ENCODE measurements at regions of chr1 and their contacts with region 1.

Region 1: GRCh38 chr1:100265931-100266740 is at the start of gene RTCA:
- DNase-seq: peak; percentile 54
- H3K4me3 ChIP-seq: peak within 1 kb of the TSS; percentile 90
- CTCF ChIP-seq: no peak

Region 2: DNA sequence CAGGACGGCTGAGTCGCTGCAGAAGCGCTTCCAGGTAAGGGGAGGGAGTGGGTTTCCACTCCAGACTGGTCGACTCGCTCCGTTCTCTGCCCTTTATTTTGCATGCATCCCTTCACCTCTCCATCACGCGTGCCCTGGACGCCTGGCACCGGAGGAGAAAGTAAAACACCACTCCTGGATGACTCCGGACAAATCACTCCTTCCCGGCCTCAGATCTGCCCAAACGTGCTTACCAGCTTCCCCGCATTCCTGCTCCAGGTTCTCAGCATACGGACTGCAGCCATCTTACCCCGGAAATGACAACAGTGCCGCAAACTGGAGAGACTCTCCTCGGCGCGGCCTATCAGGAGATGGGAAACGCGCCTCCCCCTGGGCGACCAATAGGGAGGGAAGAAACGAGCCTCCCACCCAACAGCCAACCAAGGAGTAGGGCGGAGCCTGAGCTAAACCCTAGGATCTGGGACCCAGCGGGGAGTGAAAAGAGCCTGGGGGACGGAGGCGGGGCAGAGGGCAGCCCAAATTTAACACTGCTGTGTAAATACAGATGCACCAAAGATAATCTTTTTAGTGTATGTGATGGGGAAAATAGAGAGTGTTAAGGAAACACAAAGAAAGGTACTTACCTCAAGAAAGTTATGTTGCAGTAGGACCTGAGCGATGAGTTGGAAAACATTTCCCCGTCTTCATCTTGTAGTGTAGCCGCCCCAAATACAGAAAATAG is 16.4 kb before region 1 on chr1 and contains the start of gene DBT:
- CTCF ChIA-PET with region 1: interaction called, 3 read pairs
- POLR2A ChIA-PET with region 1: interaction called, 11 read pairs
- DNase-seq: peak; percentile 65
- H3K4me3 ChIP-seq: peak within 1 kb of the TSS; percentile 93
- CTCF ChIP-seq: no peak

Region 3: DNA sequence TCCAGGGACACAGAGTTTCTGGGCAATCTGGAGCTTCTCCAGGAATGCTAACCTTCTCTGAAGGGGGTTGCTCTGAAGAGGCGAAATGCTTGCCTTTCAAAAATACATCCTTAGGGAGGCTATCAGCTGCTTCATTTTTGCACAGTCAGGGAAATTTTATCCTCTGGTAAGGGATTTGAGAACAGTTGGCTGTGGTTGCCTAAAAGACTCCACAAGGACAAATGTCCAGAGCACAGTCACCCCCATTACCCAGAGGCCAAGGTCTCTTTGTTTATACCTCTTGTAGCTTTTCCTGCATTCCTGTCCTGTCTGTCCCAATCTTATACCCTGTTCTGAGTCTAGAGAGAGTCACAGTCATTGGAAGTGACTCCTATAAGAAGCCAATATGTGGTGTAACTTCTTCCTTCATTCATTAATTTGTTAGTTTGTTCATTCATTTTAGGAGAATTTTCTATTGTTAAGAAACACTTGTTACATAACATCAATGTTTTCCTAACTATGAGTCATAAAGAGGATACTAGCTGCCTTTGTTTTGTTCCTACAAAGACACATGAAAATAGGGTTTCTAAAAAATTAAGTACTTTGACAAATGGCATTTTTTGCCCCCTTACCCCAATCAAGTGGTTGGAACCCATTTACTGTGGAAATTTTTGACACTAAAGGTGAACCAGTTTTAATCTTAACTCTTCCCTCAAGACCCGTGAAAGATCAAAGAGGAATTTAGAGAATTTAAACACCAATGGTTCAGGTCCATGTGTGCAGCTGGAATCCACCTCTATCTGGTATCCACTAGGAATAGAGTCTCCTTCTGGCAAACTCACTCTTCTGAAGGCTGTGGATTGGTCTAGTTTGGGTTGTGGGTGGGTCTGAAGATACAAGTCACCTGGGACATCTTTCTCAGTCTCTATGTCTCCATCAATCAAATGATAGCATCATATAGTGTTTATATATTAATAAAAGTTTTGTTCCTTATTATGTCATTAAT is 318.9 kb after region 1 on chr1:
- CTCF ChIA-PET with region 1: no interaction called
- POLR2A ChIA-PET with region 1: no interaction called
- DNase-seq: no peak
- H3K4me3 ChIP-seq: no peak overlapping the region
- CTCF ChIP-seq: no peak